ENCODE measurements at regions of chr4 and their contacts with region 1.

Region 1: GRCh38 chr4:4334798-4335520 is 44.9 kb downstream of the ZBTB49 start:
- DNase-seq: peak; percentile 92
- H3K4me3 Mint-ChIP-seq: no peak overlapping the region
- H3K27ac Mint-ChIP-seq: no peak overlapping the region
- H3K4me1 Mint-ChIP-seq: peaks cover 2% of the 10 kb centered on the region
- H3K27me3 Mint-ChIP-seq: no peaks in the 10 kb centered on the region

Region 2: GRCh38 chr4:4248029-4248884 is 86.7 kb before region 1 on chr4 and contains the start of gene TMEM128:
- intact Hi-C with region 1: loop called (anchors 1 kb)
- DNase-seq: peak; percentile 98
- H3K4me3 Mint-ChIP-seq: peak within 1 kb of the TSS; percentile 92
- H3K27ac Mint-ChIP-seq: peak within 1 kb of the TSS; percentile 95
- H3K4me1 Mint-ChIP-seq: peaks cover 20% of the 10 kb centered on the region
- H3K27me3 Mint-ChIP-seq: no peaks in the 10 kb centered on the region
- total RNA-seq, gene TMEM128: 18.5 and 20.7 TPM in 2 replicates

Region 3: DNA sequence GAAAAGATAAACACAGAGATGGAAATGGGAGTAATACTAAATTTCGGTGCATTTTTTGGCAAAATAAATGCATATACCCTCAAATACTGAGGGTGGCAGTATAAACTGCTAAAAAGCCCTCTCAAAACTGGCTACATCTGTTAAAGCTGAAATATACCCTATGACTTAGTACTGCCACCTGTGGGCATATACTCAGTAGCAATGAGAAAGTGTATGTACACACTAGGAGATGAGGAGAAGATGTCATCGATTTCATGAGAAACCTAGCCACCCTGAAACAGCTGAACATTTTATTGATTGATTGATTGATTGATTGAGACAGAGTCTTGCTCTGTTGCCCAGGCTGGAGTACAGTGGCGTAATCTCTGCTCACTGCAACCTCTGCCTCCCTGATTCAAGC is 74.7 kb before region 1 on chr4:
- intact Hi-C with region 1: loop called (anchors 1 kb)
- DNase-seq: peak; percentile 69
- H3K4me3 Mint-ChIP-seq: no peak overlapping the region
- H3K27ac Mint-ChIP-seq: no peak overlapping the region
- H3K4me1 Mint-ChIP-seq: no peaks in the 10 kb centered on the region
- H3K27me3 Mint-ChIP-seq: peaks cover 2% of the 10 kb centered on the region

Region 4: GRCh38 chr4:4289941-4290850 is 44.8 kb before region 1 on chr4 and contains the starts of genes LYAR and ZBTB49:
- intact Hi-C with region 1: loop called (anchors 2 kb)
- DNase-seq: peak; percentile 100
- H3K4me3 Mint-ChIP-seq: peak within 1 kb of the TSS; percentile 99
- H3K27ac Mint-ChIP-seq: peak within 1 kb of the TSS; percentile 95
- H3K4me1 Mint-ChIP-seq: peaks cover 41% of the 10 kb centered on the region
- H3K27me3 Mint-ChIP-seq: no peaks in the 10 kb centered on the region
- total RNA-seq, gene LYAR: 93.9 and 95.5 TPM in 2 replicates
- total RNA-seq, gene ZBTB49: 7.2 and 8.6 TPM in 2 replicates

Region 5: DNA sequence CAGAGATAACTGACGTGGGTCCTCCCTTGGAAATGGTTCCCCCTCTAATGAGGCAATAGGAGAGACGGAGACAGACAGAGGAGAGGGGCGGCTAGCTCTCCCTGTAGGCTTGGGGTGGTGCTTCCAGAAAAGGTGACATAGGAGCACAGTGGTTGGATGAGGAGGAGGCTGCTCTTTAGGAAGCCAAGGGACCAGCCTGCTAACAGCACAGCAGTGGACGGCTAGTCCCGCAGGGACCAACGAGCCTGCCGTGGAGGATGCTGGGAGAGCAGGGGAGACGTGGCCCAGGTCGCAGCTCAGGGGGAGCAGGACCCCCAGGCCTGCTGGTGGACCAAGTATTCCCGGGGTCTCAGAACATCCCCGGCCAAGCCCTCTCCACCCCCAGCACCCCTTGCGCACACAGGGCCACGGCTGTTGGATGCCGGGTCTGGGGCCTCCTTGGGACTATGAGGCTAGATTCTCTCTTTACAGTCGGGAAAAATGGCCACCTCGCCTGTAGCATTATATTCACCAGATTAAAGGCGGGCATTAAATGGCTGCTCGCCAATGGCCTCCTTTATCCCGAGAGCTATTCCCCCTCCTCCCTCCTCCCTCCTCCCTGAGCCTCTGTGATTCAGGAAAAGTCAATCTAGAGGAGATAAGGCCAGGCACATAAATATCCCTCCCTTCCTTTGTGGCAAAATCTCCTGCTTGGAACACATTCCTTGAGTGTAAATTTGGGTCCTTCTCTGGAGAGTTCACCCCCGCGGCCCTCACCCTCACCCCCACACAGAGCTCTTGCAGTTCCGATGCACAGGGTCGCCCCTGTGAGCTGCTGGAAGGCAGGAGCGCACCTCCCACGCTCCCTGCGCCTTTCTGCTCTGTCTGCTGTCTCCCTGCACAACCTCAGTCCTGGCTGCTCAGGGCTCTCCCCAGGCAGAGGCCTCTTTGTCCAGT is 21.4 kb after region 1 on chr4:
- intact Hi-C with region 1: no loop called
- DNase-seq: no peak
- H3K4me3 Mint-ChIP-seq: no peak overlapping the region
- H3K27ac Mint-ChIP-seq: no peak overlapping the region
- H3K4me1 Mint-ChIP-seq: no peaks in the 10 kb centered on the region
- H3K27me3 Mint-ChIP-seq: no peaks in the 10 kb centered on the region